ENCODE measurements at regions of chr19 and their contacts with region 1.

Region 1: GRCh38 chr19:12965017-12965811 is 4.2 kb upstream of the DAND5 start:
- DNase-seq: peak; percentile 87
- ATAC-seq: peak; percentile 96
- H3K4me3 Mint-ChIP-seq: peak overlapping the region; percentile 90
- H3K27ac Mint-ChIP-seq: peak overlapping the region; percentile 92
- H3K4me1 Mint-ChIP-seq: peaks cover 11% of the 10 kb centered on the region
- H3K27me3 Mint-ChIP-seq: no peaks in the 10 kb centered on the region
- CTCF ChIP-seq: peak; percentile 96

Region 2: GRCh38 chr19:12838182-12838885 is 126.9 kb before region 1 on chr19 and contains the start of gene MAST1:
- CTCF ChIA-PET with region 1: no interaction called
- POLR2A ChIA-PET with region 1: no interaction called
- intact Hi-C with region 1: no loop called
- DNase-seq: peak; percentile 65
- ATAC-seq: peak; percentile 62
- H3K4me3 Mint-ChIP-seq: peak within 1 kb of the TSS; percentile 57
- H3K27ac Mint-ChIP-seq: no peak within 1 kb of the TSS
- H3K4me1 Mint-ChIP-seq: peaks cover 36% of the 10 kb centered on the region
- H3K27me3 Mint-ChIP-seq: peaks cover 76% of the 10 kb centered on the region
- CTCF ChIP-seq: peak; percentile 62
- total RNA-seq, gene MAST1: 2.4 to 3.0 TPM

Region 3: GRCh38 chr19:12913011-12913561 is 52.1 kb before region 1 on chr19:
- CTCF ChIA-PET with region 1: interaction called, 14 read pairs
- POLR2A ChIA-PET with region 1: interaction called, 4 read pairs
- intact Hi-C with region 1: no loop called
- DNase-seq: no peak
- ATAC-seq: no peak
- H3K4me3 Mint-ChIP-seq: no peak overlapping the region
- H3K27ac Mint-ChIP-seq: peak overlapping the region; percentile 40
- H3K4me1 Mint-ChIP-seq: peaks cover 19% of the 10 kb centered on the region
- H3K27me3 Mint-ChIP-seq: no peaks in the 10 kb centered on the region
- CTCF ChIP-seq: no peak

Region 4: DNA sequence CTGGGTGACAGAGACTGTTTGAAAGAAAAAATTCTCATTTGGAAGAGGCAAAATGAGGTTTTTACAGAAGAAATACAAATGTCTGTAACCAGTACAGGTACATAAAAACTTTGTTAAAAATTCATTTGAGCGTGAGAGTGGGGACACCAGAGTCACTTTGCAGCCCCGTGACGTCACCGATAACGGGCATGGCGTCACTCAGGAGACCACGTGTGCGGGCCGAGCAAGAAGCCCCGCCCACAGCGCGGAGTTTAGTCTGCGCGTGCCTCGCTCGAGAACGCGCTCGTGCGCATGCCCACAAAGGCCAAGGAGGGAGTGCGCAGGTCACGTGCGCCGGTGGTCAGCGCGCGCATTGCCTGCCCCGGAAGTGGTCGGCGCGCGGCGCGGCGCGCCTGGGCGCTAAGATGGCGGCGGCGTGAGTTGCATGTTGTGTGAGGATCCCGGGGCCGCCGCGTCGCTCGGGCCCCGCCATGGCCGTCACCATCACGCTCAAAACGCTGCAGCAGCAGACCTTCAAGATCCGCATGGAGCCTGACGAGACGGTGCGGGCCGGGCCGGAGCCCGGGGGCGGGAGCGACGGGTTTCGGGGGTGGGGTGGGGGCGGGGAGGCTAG is 19.6 kb before region 1 on chr19 and contains the start of gene RAD23A:
- CTCF ChIA-PET with region 1: interaction called, 16 read pairs
- POLR2A ChIA-PET with region 1: no interaction called
- intact Hi-C with region 1: no loop called
- DNase-seq: peak; percentile 99
- ATAC-seq: peak; percentile 87
- H3K4me3 Mint-ChIP-seq: peak within 1 kb of the TSS; percentile 85
- H3K27ac Mint-ChIP-seq: peak within 1 kb of the TSS; percentile 96
- H3K4me1 Mint-ChIP-seq: peaks cover 44% of the 10 kb centered on the region
- H3K27me3 Mint-ChIP-seq: no peaks in the 10 kb centered on the region
- CTCF ChIP-seq: no peak
- total RNA-seq, gene RAD23A: 189 to 190 TPM

Region 5: DNA sequence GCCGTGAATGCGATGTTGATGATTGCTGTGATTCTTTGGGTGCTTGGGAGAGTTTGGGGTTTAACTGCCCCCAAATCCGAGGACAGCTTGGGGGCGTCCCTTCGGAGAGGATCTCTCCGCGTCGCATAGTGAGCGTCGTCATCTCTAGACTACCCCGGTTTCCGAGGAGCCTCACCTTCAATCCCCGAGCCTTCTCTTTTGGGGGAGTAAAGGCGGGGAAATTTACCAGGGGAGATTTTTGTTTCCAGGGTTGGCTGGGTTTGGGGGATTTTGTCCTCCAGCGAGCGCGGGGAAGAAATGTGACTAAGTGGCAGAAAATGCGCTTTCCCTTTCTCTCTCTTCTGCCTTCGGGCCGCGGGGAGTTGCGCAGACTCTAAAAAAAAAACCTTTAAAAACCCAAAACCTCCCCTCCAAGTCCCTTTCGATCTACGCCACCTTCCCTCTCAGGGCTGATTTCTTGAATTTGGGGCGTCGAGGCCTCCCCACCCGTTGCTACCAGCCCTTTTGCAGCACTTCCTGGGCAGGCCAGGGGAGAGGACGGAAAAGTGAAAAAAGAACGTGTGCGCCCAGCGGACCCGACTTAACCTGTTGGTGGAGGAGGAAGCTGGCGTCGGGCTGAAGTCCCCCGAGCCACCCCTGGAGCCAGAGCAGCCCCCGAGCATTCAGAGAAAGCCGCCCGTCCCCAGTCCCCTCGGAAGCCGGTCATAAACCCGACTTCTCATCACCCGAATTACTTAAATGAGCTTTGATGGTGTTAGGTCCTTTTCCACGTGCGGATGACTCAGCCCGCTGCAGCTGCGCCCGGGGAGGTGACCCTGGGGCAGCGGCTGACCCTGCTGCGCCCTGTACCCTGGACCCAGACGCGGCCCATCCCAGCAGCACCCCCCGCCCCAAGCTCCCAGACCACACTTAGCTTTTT is 47.7 kb after region 1 on chr19:
- CTCF ChIA-PET with region 1: interaction called, 12 read pairs
- POLR2A ChIA-PET with region 1: no interaction called
- intact Hi-C with region 1: no loop called
- DNase-seq: peak; percentile 70
- ATAC-seq: peak; percentile 62
- H3K4me3 Mint-ChIP-seq: peak overlapping the region; percentile 77
- H3K27ac Mint-ChIP-seq: peak overlapping the region; percentile 75
- H3K4me1 Mint-ChIP-seq: peaks cover 19% of the 10 kb centered on the region
- H3K27me3 Mint-ChIP-seq: peaks cover 59% of the 10 kb centered on the region
- CTCF ChIP-seq: no peak

Region 6: DNA sequence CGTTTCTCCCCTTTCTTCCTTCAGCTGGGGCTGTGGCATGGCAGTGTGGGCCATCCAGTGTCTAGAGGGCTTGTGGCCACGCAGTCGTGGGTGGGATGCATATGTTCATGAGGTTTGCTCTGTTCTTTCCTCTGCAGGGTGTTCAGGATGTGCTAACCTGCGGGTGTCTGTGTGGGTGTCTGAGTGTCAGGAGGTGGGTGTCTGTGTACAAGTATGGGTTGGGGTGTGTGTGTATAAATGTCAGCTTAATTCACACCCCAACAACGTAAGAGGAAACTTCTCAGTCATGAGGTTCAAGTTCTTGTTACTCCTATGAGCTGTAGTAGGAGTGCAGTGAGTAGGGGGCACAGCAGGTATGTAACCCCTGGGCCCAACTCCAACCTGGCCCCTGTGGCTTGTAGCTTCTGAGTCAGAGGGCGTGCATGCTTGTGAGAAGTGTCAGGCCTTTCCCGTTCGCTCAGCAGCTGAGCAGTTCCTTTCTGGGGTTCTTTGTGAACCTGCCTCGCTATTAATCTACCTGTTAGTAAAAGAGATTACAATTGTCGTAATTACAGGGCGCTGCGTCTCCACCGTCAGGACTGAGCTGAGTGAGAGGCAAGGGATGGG is 79.1 kb after region 1 on chr19:
- CTCF ChIA-PET with region 1: interaction called, 21 read pairs
- POLR2A ChIA-PET with region 1: no interaction called
- intact Hi-C with region 1: no loop called
- DNase-seq: peak; percentile 78
- ATAC-seq: peak; percentile 90
- H3K4me3 Mint-ChIP-seq: no peak overlapping the region
- H3K27ac Mint-ChIP-seq: peak overlapping the region; percentile 35
- H3K4me1 Mint-ChIP-seq: peaks cover 30% of the 10 kb centered on the region
- H3K27me3 Mint-ChIP-seq: no peaks in the 10 kb centered on the region
- CTCF ChIP-seq: no peak

Region 7: GRCh38 chr19:13082192-13083007 is 117.2 kb after region 1 on chr19:
- CTCF ChIA-PET with region 1: interaction called, 12 read pairs
- POLR2A ChIA-PET with region 1: no interaction called
- intact Hi-C with region 1: no loop called
- DNase-seq: no peak
- ATAC-seq: no peak
- H3K4me3 Mint-ChIP-seq: no peak overlapping the region
- H3K27ac Mint-ChIP-seq: no peak overlapping the region
- H3K4me1 Mint-ChIP-seq: no peaks in the 10 kb centered on the region
- H3K27me3 Mint-ChIP-seq: no peaks in the 10 kb centered on the region
- CTCF ChIP-seq: no peak

Region 8: DNA sequence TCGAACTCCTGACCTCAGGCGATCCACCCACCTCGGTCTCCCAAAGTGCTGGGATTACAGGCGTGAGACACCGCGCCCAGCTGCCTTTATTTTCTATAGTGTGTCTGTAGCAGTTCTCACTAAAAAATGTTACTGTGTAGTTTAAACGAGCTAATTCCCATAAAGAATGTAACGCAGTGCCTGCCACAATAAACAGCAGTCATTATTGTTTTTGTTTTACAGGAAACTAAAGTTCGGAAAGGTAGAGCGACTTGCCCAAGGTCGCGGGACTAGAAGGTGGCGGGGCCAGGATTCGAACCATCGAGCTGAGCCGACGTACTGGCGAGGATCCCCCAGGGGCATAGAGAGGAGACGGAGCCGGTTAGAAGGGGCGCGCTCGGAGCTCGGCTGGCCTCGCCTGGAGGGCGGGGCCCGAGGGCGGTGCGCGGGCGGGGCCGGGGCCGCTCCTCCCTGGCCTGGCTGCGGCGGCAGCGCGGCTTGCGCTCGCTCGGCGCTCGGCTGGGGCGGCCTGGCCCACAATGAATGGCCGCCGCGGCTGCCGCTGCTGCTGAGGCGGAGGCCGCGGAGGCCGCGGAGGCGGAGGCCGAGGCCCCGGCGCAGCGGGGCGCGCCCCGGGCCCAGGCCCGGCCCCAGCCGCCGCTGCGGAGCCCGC is 152.7 kb after region 1 on chr19 and contains the start of gene NACC1:
- CTCF ChIA-PET with region 1: interaction called, 21 read pairs
- POLR2A ChIA-PET with region 1: no interaction called
- intact Hi-C with region 1: no loop called
- DNase-seq: peak; percentile 92
- ATAC-seq: peak; percentile 84
- H3K4me3 Mint-ChIP-seq: peak within 1 kb of the TSS; percentile 86
- H3K27ac Mint-ChIP-seq: peak within 1 kb of the TSS; percentile 95
- H3K4me1 Mint-ChIP-seq: peaks cover 52% of the 10 kb centered on the region
- H3K27me3 Mint-ChIP-seq: no peaks in the 10 kb centered on the region
- CTCF ChIP-seq: no peak
- total RNA-seq, gene NACC1: 73.8 to 87.5 TPM

Measured in activated CD8-positive, alpha-beta T cell treated with anti-CD3 and anti-CD28 coated beads for 36 hours (primary cell).